MCF 10A (cell line): ENCODE measurements at regions of chr1 and their contacts with region 1.

Region 1: GRCh38 chr1:5514519-5515183 is 477.6 kb downstream of the NPHP4 start:
- DNase-seq: peak; percentile 53
- H3K4me3 Mint-ChIP-seq: no peak overlapping the region
- H3K27ac Mint-ChIP-seq: no peak overlapping the region
- H3K4me1 Mint-ChIP-seq: peaks cover 9% of the 10 kb centered on the region
- H3K27me3 Mint-ChIP-seq: peaks cover 43% of the 10 kb centered on the region
- CTCF ChIP-seq: peak; percentile 98

Region 2: GRCh38 chr1:5244631-5245285 is 269.9 kb before region 1 on chr1:
- CTCF ChIA-PET with region 1: no interaction called
- POLR2A ChIA-PET with region 1: no interaction called
- intact Hi-C with region 1: no loop called
- DNase-seq: no peak
- H3K4me3 Mint-ChIP-seq: no peak overlapping the region
- H3K27ac Mint-ChIP-seq: no peak overlapping the region
- H3K4me1 Mint-ChIP-seq: no peaks in the 10 kb centered on the region
- H3K27me3 Mint-ChIP-seq: peaks cover 13% of the 10 kb centered on the region
- CTCF ChIP-seq: no peak

Region 3: DNA sequence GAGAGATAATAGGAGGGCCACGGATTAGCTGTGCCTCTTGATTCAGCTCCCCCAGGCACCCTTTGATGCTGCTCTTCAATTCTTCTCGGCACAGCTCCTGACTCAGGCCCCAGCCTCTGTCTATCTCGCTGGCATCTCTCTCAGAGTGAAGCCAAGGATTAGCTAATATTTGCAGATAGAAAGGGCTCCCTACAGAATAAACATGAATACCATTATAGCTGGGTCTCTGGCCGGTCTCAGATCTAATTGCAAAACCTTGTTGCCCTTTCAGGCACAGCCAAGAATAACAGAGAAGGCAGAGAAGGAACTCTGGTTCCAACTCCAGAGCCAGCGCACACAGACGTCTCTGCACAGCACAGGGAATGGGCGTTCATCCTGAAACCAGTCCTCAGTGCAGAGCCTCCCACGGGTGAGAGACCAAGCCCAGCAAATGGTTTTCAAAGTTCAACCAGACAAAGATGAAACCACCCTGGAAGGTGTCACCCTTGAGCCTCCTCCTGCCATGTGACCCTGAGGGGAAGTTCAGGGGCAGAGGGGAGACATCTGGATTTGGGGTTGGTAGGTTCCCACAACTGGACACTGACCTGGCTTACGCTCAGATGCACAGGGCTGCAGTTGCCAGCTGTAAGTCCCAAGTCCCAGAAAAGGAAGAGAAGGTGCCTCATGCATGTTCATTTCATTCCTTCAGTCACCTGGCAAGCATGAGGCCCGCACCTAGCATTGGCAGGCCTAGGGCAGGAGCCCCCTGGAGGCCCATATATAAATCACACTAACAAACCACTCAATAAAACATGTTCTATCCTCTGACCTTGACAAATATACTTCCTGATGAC is 83.6 kb after region 1 on chr1:
- CTCF ChIA-PET with region 1: interaction called, 7 read pairs
- POLR2A ChIA-PET with region 1: no interaction called
- intact Hi-C with region 1: loop called (anchors 2 kb)
- DNase-seq: peak; percentile 1
- H3K4me3 Mint-ChIP-seq: no peak overlapping the region
- H3K27ac Mint-ChIP-seq: no peak overlapping the region
- H3K4me1 Mint-ChIP-seq: peaks cover 15% of the 10 kb centered on the region
- H3K27me3 Mint-ChIP-seq: peaks cover 28% of the 10 kb centered on the region
- CTCF ChIP-seq: no peak

Region 4: GRCh38 chr1:5620990-5621389 is 106.3 kb after region 1 on chr1:
- CTCF ChIA-PET with region 1: interaction called, 18 read pairs
- POLR2A ChIA-PET with region 1: interaction called, 4 read pairs
- intact Hi-C with region 1: loop called (anchors 1 kb)
- DNase-seq: peak; percentile 43
- H3K4me3 Mint-ChIP-seq: no peak overlapping the region
- H3K27ac Mint-ChIP-seq: no peak overlapping the region
- H3K4me1 Mint-ChIP-seq: peaks cover 24% of the 10 kb centered on the region
- H3K27me3 Mint-ChIP-seq: peaks cover 15% of the 10 kb centered on the region
- CTCF ChIP-seq: peak; percentile 46

Region 5: GRCh38 chr1:5680630-5681029 is 166.0 kb after region 1 on chr1:
- CTCF ChIA-PET with region 1: interaction called, 11 read pairs
- POLR2A ChIA-PET with region 1: no interaction called
- intact Hi-C with region 1: no loop called
- DNase-seq: peak; percentile 17
- H3K4me3 Mint-ChIP-seq: no peak overlapping the region
- H3K27ac Mint-ChIP-seq: no peak overlapping the region
- H3K4me1 Mint-ChIP-seq: no peaks in the 10 kb centered on the region
- H3K27me3 Mint-ChIP-seq: peaks cover 12% of the 10 kb centered on the region
- CTCF ChIP-seq: no peak

Region 6: GRCh38 chr1:5751833-5752745 is 237.4 kb after region 1 on chr1:
- CTCF ChIA-PET with region 1: interaction called, 144 read pairs
- POLR2A ChIA-PET with region 1: no interaction called
- intact Hi-C with region 1: no loop called
- DNase-seq: no peak
- H3K4me3 Mint-ChIP-seq: no peak overlapping the region
- H3K27ac Mint-ChIP-seq: no peak overlapping the region
- H3K4me1 Mint-ChIP-seq: no peaks in the 10 kb centered on the region
- H3K27me3 Mint-ChIP-seq: peaks cover 44% of the 10 kb centered on the region
- CTCF ChIP-seq: no peak

Region 7: GRCh38 chr1:5915587-5916571 is 401.2 kb after region 1 on chr1:
- CTCF ChIA-PET with region 1: interaction called, 7 read pairs
- POLR2A ChIA-PET with region 1: no interaction called
- intact Hi-C with region 1: loop called (anchors 5 kb)
- DNase-seq: peak; percentile 42
- H3K4me3 Mint-ChIP-seq: no peak overlapping the region
- H3K27ac Mint-ChIP-seq: no peak overlapping the region
- H3K4me1 Mint-ChIP-seq: peaks cover 7% of the 10 kb centered on the region
- H3K27me3 Mint-ChIP-seq: no peaks in the 10 kb centered on the region
- CTCF ChIP-seq: peak; percentile 62